ENCODE measurements at regions of chr4 and their contacts with region 1.

Region 1: GRCh38 chr4:8241895-8242696 is 27.5 kb upstream of the HTRA3 start:
- DNase-seq: peak; percentile 70
- H3K4me3 ChIP-seq: no peak overlapping the region
- H3K27ac ChIP-seq: no peak overlapping the region
- H3K4me1 ChIP-seq: no peaks in the 10 kb centered on the region
- H3K27me3 ChIP-seq: no peaks in the 10 kb centered on the region
- CTCF ChIP-seq: peak; percentile 96 to 99 (median 97)
- POLR2A ChIP-seq: no peak

Region 2: GRCh38 chr4:8297691-8298485 is 55.8 kb after region 1 on chr4:
- intact Hi-C with region 1: no loop called
- DNase-seq: no peak
- H3K4me3 ChIP-seq: no peak overlapping the region
- H3K27ac ChIP-seq: no peak overlapping the region
- H3K4me1 ChIP-seq: no peaks in the 10 kb centered on the region
- H3K27me3 ChIP-seq: no peaks in the 10 kb centered on the region
- CTCF ChIP-seq: no peak
- POLR2A ChIP-seq: no peak

Region 3: GRCh38 chr4:8320386-8320750 is 78.3 kb after region 1 on chr4:
- intact Hi-C with region 1: no loop called
- DNase-seq: no peak
- H3K4me3 ChIP-seq: no peak overlapping the region
- H3K27ac ChIP-seq: peak overlapping the region; percentile 63
- H3K4me1 ChIP-seq: no peaks in the 10 kb centered on the region
- H3K27me3 ChIP-seq: no peaks in the 10 kb centered on the region
- CTCF ChIP-seq: no peak
- POLR2A ChIP-seq: no peak

Region 4: GRCh38 chr4:8594097-8595038 is 352.3 kb after region 1 on chr4:
- intact Hi-C with region 1: loop called (anchors 5 kb)
- DNase-seq: peak; percentile 55
- H3K4me3 ChIP-seq: no peak overlapping the region
- H3K27ac ChIP-seq: no peak overlapping the region
- H3K4me1 ChIP-seq: peaks cover 7% of the 10 kb centered on the region
- H3K27me3 ChIP-seq: peaks cover 12% of the 10 kb centered on the region
- CTCF ChIP-seq: peak; percentile 20 to 72 (median 64)
- POLR2A ChIP-seq: no peak

Region 5: GRCh38 chr4:8605289-8605688 is 363.2 kb after region 1 on chr4:
- intact Hi-C with region 1: no loop called
- DNase-seq: no peak
- H3K4me3 ChIP-seq: no peak overlapping the region
- H3K27ac ChIP-seq: no peak overlapping the region
- H3K4me1 ChIP-seq: no peaks in the 10 kb centered on the region
- H3K27me3 ChIP-seq: peaks cover 3% of the 10 kb centered on the region
- CTCF ChIP-seq: no peak
- POLR2A ChIP-seq: no peak

Measured in prostate gland (tissue), 2 donors.